GM23248 (cell line): ENCODE measurements at regions of chr3 and their contacts with region 1.

Region 1: GRCh38 chr3:160343132-160343531 is 55.9 kb downstream of the IFT80 start:
- DNase-seq: peak; percentile 69
- H3K4me3 ChIP-seq: no peak overlapping the region
- H3K27ac ChIP-seq: no peak overlapping the region
- H3K4me1 ChIP-seq: no peaks in the 10 kb centered on the region
- H3K27me3 ChIP-seq: no peaks in the 10 kb centered on the region

Region 2: GRCh38 chr3:160027541-160028195 is 315.5 kb before region 1 on chr3:
- in situ Hi-C with region 1: loop called (anchors 10 kb)
- DNase-seq: peak; percentile 82
- H3K4me3 ChIP-seq: no peak overlapping the region
- H3K27ac ChIP-seq: peak overlapping the region; percentile 76
- H3K4me1 ChIP-seq: peaks cover 22% of the 10 kb centered on the region
- H3K27me3 ChIP-seq: no peaks in the 10 kb centered on the region

Region 3: GRCh38 chr3:160163229-160163878 is 179.8 kb before region 1 on chr3:
- in situ Hi-C with region 1: loop called (anchors 10 kb)
- DNase-seq: peak; percentile 63
- H3K4me3 ChIP-seq: no peak overlapping the region
- H3K27ac ChIP-seq: no peak overlapping the region
- H3K4me1 ChIP-seq: no peaks in the 10 kb centered on the region
- H3K27me3 ChIP-seq: no peaks in the 10 kb centered on the region

Region 4: GRCh38 chr3:160200353-160200752 is 142.8 kb before region 1 on chr3:
- in situ Hi-C with region 1: no loop called
- DNase-seq: no peak
- H3K4me3 ChIP-seq: no peak overlapping the region
- H3K27ac ChIP-seq: no peak overlapping the region
- H3K4me1 ChIP-seq: no peaks in the 10 kb centered on the region
- H3K27me3 ChIP-seq: no peaks in the 10 kb centered on the region